ENCODE measurements at regions of chr3 and their contacts with region 1.

Region 1: DNA sequence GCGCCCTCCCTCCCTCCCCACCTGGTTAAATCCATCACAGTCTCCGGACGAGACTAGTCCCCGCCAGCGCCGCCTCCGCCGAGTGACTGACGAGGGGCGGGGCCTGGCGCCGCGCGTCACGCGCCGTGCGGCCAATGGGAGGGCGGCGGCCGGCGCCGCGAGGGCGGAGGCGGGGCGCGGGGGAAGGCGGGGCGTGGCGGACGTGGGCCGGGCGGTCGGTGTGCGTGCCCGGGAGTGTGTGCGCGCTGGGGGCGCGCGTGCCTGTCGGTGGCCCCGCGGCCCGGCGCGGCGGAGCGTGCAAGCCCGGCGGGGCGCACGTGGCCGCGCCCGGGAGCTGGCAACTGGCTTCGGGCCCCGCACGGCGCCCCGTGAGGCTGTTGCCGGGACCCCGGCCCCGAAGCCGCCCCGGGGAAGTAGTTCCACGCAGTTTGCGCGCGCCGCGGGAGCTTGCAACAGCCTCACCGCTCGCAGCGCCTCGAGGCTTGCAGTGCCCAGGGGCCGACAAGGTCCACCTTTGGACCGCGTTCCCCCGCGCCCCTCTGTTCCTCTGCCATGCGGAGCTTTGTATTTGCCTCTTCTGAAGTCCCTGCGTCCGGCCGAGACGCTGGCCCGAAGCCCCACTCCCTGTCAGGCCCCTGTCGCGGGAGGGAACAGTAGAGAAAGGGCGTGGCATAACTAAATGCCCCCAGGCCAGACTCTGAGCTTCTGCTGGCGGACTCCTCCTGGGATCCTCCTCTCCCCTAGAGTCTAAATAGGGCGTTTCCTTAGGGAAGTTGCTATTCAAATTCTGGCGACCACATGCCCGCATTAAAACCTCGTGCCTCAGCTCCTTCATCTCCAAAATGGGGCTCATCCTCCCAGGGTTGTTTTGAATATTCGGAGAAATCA is 400.9 kb downstream of the SHQ1 start:
- DNase-seq: no peak
- ATAC-seq: peak; percentile 81
- H3K4me3 ChIP-seq: peak overlapping the region; percentile 37; the same call in 1 of the 2 replicates
- H3K27ac ChIP-seq: no peak overlapping the region
- H3K4me1 ChIP-seq: peaks cover 6% of the 10 kb centered on the region; the same call in 1 of the 2 replicates
- H3K27me3 ChIP-seq: no peaks in the 10 kb centered on the region; a peak in 1 of 4 replicates
- CTCF ChIP-seq: no peak; a peak in 1 of 6 replicates
- EP300 ChIP-seq: no peak
- POLR2A ChIP-seq: no peak
- RAD21 ChIP-seq: no peak

Region 2: DNA sequence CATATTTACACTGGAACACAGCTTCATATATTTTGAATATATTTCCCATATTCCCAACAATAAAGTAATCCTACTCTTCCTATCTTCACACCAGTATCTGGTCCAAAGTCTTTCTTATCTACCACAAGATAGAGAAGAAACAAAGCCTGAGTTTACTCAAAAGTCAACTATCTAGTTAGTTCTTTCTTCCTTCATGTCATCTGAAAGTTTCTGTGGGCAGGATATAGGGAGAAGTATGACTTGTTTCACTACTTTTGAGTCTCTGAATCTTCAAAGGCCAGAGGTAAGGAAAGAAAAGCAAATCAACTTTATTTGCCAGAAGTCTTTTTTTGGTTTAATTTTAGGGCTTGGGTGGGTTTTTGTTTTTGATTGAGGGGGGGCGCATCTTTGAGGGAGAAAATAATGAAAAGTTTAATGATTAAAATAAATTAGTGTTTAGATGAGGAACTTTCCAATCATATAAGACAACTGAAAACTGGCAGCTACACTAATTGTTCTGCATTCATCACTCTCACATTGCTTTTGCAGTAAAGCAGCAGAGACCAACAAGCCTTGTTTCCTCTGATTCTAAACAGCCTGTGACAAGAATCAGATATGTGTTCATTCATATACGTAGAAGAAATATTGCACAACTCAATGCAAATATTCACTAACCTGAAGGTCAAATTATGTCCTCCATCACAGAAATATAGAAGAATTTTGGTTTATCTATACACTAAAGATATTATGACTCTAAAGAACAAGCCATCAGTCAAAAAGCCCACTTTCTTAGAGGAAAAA is 20.5 kb before region 1 on chr3:
- CTCF ChIA-PET with region 1: interaction called, 3 read pairs
- POLR2A ChIA-PET with region 1: interaction called, 3 read pairs
- RAD21 ChIA-PET with region 1: interaction called, 10 read pairs
- SMC1A ChIA-PET with region 1: interaction called, 41 read pairs
- in situ Hi-C with region 1: no loop called
- intact Hi-C with region 1: loop called (anchors 1 kb)
- DNase-seq: no peak
- ATAC-seq: peak; percentile 76
- H3K4me3 ChIP-seq: 0 out of 2 replicates have a peak overlapping the region, but pooled peaks have one; percentile 27
- H3K27ac ChIP-seq: peak overlapping the region; percentile 37; the same call in 1 of the 2 replicates
- H3K4me1 ChIP-seq: peaks cover 28% of the 10 kb centered on the region
- H3K27me3 ChIP-seq: no peaks in the 10 kb centered on the region
- CTCF ChIP-seq: no peak
- EP300 ChIP-seq: no peak
- POLR2A ChIP-seq: no peak
- RAD21 ChIP-seq: no peak

Region 3: GRCh38 chr3:72462595-72463011 is 15.3 kb after region 1 on chr3:
- CTCF ChIA-PET with region 1: no interaction called
- POLR2A ChIA-PET with region 1: no interaction called
- RAD21 ChIA-PET with region 1: no interaction called
- SMC1A ChIA-PET with region 1: no interaction called
- in situ Hi-C with region 1: no loop called
- intact Hi-C with region 1: no loop called
- DNase-seq: no peak
- ATAC-seq: no peak
- H3K4me3 ChIP-seq: no peak overlapping the region
- H3K27ac ChIP-seq: no peak overlapping the region
- H3K4me1 ChIP-seq: no peaks in the 10 kb centered on the region
- H3K27me3 ChIP-seq: 0 out of 4 replicates have a peak, but pooled peaks cover 0 to 2% of the 10 kb centered on the region in 2 experiments
- CTCF ChIP-seq: no peak
- EP300 ChIP-seq: no peak
- POLR2A ChIP-seq: no peak
- RAD21 ChIP-seq: no peak